ENCODE measurements at regions of chr12 and their contacts with region 1.

Region 1: DNA sequence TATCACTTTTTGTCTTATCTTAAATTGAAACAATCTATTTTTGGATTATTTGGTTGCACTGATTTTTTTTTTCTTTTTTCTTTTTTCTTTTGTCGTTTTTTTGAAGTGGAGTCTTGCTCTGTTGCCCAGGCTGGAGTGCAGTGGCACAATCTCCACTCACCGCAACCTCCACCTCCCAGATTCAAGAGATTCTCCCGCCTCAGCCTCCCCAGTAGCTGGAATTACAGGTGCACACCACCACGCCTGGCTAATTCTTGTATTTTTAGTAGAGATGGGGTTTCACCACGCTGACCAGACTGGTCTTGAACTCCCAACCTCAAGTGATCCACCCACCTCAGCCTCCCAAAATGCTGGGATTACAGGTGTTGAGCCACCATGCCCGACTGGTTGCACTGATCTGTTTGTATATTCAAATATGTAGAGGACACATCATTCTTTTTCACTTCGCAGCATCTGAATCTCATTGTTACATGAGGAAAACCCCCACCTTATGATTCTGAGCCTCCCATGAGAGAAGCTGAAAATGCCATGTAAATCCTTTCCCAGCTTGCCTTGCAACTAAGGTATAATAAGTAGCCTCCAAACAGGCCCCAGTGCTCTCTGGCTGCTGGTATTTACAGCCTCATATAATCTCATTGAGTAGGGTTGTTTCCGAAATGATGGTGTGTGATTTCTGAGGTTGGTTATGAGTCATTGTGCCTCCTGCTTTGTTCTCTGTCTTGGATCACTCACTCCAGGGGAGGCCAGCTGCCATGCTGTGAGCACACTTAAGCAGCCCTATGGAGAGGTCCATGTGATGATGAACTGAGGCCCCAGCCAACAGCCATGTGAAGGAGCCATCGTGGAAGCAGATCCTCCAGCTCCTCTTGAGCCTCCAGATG is 5.2 kb upstream of the HSP90B1 start:
- DNase-seq: peak; percentile 80
- ATAC-seq: peak; percentile 53
- H3K4me3 Mint-ChIP-seq: peak overlapping the region; percentile 63
- H3K27ac Mint-ChIP-seq: peak overlapping the region; percentile 87
- H3K4me1 Mint-ChIP-seq: peaks cover 36% of the 10 kb centered on the region
- H3K27me3 Mint-ChIP-seq: no peaks in the 10 kb centered on the region

Region 2: GRCh38 chr12:103858953-103859601 is 65.9 kb before region 1 on chr12:
- CTCF ChIA-PET with region 1: no interaction called
- POLR2A ChIA-PET with region 1: no interaction called
- intact Hi-C with region 1: no loop called
- DNase-seq: no peak
- ATAC-seq: no peak
- H3K4me3 Mint-ChIP-seq: no peak overlapping the region
- H3K27ac Mint-ChIP-seq: no peak overlapping the region
- H3K4me1 Mint-ChIP-seq: no peaks in the 10 kb centered on the region
- H3K27me3 Mint-ChIP-seq: peaks cover 4% of the 10 kb centered on the region

Region 3: GRCh38 chr12:103884316-103884715 is 40.7 kb before region 1 on chr12:
- CTCF ChIA-PET with region 1: interaction called, 4 read pairs
- POLR2A ChIA-PET with region 1: interaction called, 3 read pairs
- intact Hi-C with region 1: loop called (anchors 2 kb)
- DNase-seq: peak; percentile 66
- ATAC-seq: peak; percentile 57
- H3K4me3 Mint-ChIP-seq: no peak overlapping the region
- H3K27ac Mint-ChIP-seq: no peak overlapping the region
- H3K4me1 Mint-ChIP-seq: peaks cover 18% of the 10 kb centered on the region
- H3K27me3 Mint-ChIP-seq: no peaks in the 10 kb centered on the region

Region 4: GRCh38 chr12:103908866-103909265 is 16.1 kb before region 1 on chr12:
- CTCF ChIA-PET with region 1: interaction called, 6 read pairs
- POLR2A ChIA-PET with region 1: interaction called, 20 read pairs
- intact Hi-C with region 1: loop called (anchors 1 kb)
- DNase-seq: no peak
- ATAC-seq: no peak
- H3K4me3 Mint-ChIP-seq: no peak overlapping the region
- H3K27ac Mint-ChIP-seq: no peak overlapping the region
- H3K4me1 Mint-ChIP-seq: peaks cover 40% of the 10 kb centered on the region
- H3K27me3 Mint-ChIP-seq: no peaks in the 10 kb centered on the region

Region 5: GRCh38 chr12:104083769-104084475 is 158.9 kb after region 1 on chr12:
- CTCF ChIA-PET with region 1: no interaction called
- POLR2A ChIA-PET with region 1: interaction called, 3 read pairs
- intact Hi-C with region 1: loop called in 1 of 2 experiments (anchors 1 kb)
- DNase-seq: peak; percentile 74
- ATAC-seq: peak; percentile 94
- H3K4me3 Mint-ChIP-seq: no peak overlapping the region
- H3K27ac Mint-ChIP-seq: peak overlapping the region; percentile 14
- H3K4me1 Mint-ChIP-seq: peaks cover 17% of the 10 kb centered on the region
- H3K27me3 Mint-ChIP-seq: no peaks in the 10 kb centered on the region

Measured in activated CD4-positive, alpha-beta T cell treated with anti-CD3 and anti-CD28 coated beads for 36 hours (primary cell).